ENCODE measurements at regions of chr11 and their contacts with region 1.

Region 1: DNA sequence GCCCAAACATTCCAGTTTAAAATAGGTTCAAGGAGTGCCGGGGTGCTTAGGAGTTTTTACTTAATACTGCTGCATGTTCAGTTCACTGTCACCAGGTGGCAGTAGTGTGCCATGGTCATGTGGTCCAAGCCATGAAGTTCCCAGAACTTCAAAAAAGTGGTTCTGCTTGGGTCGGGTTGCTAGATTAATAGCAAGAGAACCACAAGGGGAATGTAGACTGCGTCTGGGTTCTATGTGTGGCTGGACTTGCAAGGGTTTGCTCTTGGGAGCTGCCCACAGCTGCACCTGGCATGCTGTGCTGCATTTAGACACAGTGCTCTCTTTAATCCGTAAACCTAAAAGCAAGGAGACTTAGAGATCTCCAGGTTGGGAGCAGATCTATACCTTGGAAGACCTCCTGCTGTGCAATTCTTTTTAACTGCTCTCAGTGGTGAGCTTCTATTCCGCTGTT is 6.5 kb upstream of the SPON1 start:
- DNase-seq: peak; percentile 74 to 85 (median 76)
- H3K4me3 ChIP-seq: no peak overlapping the region
- H3K27ac ChIP-seq: no peak overlapping the region
- H3K4me1 ChIP-seq: no peaks in the 10 kb centered on the region
- H3K27me3 ChIP-seq: peaks cover 0 to 42% (median 20%) of the 10 kb centered on the region in 5 experiments

Region 2: GRCh38 chr11:13818325-13818724 is 137.7 kb before region 1 on chr11:
- CTCF ChIA-PET with region 1: no interaction called
- POLR2A ChIA-PET with region 1: no interaction called
- DNase-seq: no peak
- H3K4me3 ChIP-seq: no peak overlapping the region
- H3K27ac ChIP-seq: no peak overlapping the region
- H3K4me1 ChIP-seq: no peaks in the 10 kb centered on the region
- H3K27me3 ChIP-seq: no peaks in the 10 kb centered on the region

Region 3: GRCh38 chr11:13944911-13945425 is 11.0 kb before region 1 on chr11:
- CTCF ChIA-PET with region 1: interaction called, 26 read pairs
- POLR2A ChIA-PET with region 1: no interaction called
- DNase-seq: no peak
- H3K4me3 ChIP-seq: no peak overlapping the region
- H3K27ac ChIP-seq: no peak overlapping the region
- H3K4me1 ChIP-seq: peaks cover 0 to 6% (median 0%) of the 10 kb centered on the region in 4 experiments
- H3K27me3 ChIP-seq: peaks cover 0 to 2% (median 0%) of the 10 kb centered on the region in 5 experiments

Region 4: GRCh38 chr11:13970986-13971385 is 15.0 kb after region 1 on chr11:
- CTCF ChIA-PET with region 1: interaction called, 11 read pairs
- POLR2A ChIA-PET with region 1: no interaction called
- DNase-seq: no peak
- H3K4me3 ChIP-seq: no peak overlapping the region
- H3K27ac ChIP-seq: no peak overlapping the region
- H3K4me1 ChIP-seq: no peaks in the 10 kb centered on the region
- H3K27me3 ChIP-seq: peaks cover 5 to 35% (median 25%) of the 10 kb centered on the region in 5 experiments

Region 5: DNA sequence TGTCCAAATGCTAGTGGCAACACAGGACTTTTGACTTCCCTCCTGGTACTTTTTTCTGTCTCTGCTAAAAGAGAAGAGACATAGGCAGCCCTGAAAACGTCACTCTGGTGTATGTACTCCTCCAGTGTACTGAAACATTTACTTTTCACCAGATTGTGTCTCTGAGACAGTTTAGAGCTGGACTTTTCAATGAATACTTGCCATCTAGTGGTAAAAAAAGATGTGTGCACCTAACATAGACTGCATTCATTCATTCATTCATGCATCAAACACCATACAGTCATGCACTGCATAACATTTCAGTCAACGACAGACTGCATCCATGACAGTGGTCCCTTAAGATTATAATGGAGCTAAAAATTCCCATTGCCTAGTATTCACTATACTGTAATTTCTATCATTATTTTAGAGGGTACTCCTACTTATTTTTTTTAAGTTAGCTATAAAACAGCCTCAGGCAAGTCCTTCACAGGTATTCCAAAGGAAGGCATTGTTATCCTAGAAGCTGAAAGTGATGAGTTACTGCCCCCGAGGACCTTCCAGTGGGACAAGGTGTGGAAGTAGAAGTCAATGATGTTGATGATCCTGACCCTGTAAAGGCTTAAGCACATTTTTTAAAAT is 192.8 kb after region 1 on chr11:
- CTCF ChIA-PET with region 1: interaction called, 54 read pairs
- POLR2A ChIA-PET with region 1: no interaction called
- DNase-seq: peak; percentile 38 to 67 (median 66)
- H3K4me3 ChIP-seq: no peak overlapping the region
- H3K27ac ChIP-seq: no peak overlapping the region
- H3K4me1 ChIP-seq: no peaks in the 10 kb centered on the region
- H3K27me3 ChIP-seq: peaks cover 0 to 8% (median 0%) of the 10 kb centered on the region in 5 experiments

Region 6: GRCh38 chr11:14249121-14249963 is 293.3 kb after region 1 on chr11:
- CTCF ChIA-PET with region 1: interaction called, 42 read pairs
- POLR2A ChIA-PET with region 1: no interaction called
- DNase-seq: peak; percentile 60 to 79 (median 71)
- H3K4me3 ChIP-seq: peak overlapping the region in 1 of 7 experiments; percentile 19
- H3K27ac ChIP-seq: no peak overlapping the region
- H3K4me1 ChIP-seq: peaks cover 0 to 14% (median 10%) of the 10 kb centered on the region in 4 experiments
- H3K27me3 ChIP-seq: peaks cover 0 to 59% (median 17%) of the 10 kb centered on the region in 5 experiments

Measured in common myeloid progenitor, CD34-positive (primary cell).